Natural killer cell (primary cell): ENCODE measurements at regions of chr2 and their contacts with region 1.

Region 1: GRCh38 chr2:190343500-190344275 is at the start of gene INPP1:
- DNase-seq: peak; percentile 47 to 56
- ATAC-seq: peak; percentile 64 to 83 (median 70)
- H3K4me3 ChIP-seq: peak within 1 kb of the TSS; percentile 56
- H3K4me3 Mint-ChIP-seq: peak within 1 kb of the TSS; percentile 92
- H3K27ac ChIP-seq: peak within 1 kb of the TSS; percentile 70
- H3K27ac Mint-ChIP-seq: peak within 1 kb of the TSS; percentile 71 to 84
- H3K4me1 ChIP-seq: peaks cover 12% of the 10 kb centered on the region
- H3K4me1 Mint-ChIP-seq: peaks cover 16 to 18% of the 10 kb centered on the region in 2 donors
- H3K27me3 ChIP-seq: no peaks in the 10 kb centered on the region
- H3K27me3 Mint-ChIP-seq: no peaks in the 10 kb centered on the region
- CTCF ChIP-seq: no peak
- total RNA-seq, gene INPP1: 9.5 to 16.7 (median 9.6) TPM

Region 2: GRCh38 chr2:190360561-190360960 is 16.9 kb after region 1 on chr2:
- intact Hi-C with region 1: loop called (anchors 2 kb)
- DNase-seq: no peak
- ATAC-seq: no peak
- H3K4me3 ChIP-seq: peak overlapping the region; percentile 42
- H3K4me3 Mint-ChIP-seq: peak overlapping the region; percentile 98
- H3K27ac ChIP-seq: peak overlapping the region; percentile 65
- H3K27ac Mint-ChIP-seq: peak overlapping the region; percentile 95 to 99
- H3K4me1 ChIP-seq: peaks cover 6% of the 10 kb centered on the region
- H3K4me1 Mint-ChIP-seq: peaks cover 24 to 28% of the 10 kb centered on the region in 2 donors
- H3K27me3 ChIP-seq: no peaks in the 10 kb centered on the region
- H3K27me3 Mint-ChIP-seq: no peaks in the 10 kb centered on the region
- CTCF ChIP-seq: no peak

Region 3: DNA sequence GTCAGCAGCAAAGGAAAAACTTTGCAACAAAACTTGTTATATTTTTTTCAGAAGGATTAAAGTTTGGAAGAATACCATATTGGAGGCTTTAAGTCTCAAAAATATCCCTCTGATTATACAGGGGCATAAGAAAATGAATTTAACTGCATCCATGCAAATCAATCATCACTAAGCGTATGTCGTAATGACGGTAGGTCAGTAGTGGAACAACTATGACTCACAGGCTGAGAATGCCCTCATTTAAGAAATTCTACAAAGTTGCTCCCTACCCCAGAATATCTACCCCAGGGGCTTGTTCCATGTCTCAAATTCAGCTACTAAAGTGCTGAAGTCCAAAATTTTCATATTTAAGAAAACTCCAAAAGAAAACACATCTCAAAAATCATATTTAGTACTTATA is 292.7 kb after region 1 on chr2:
- intact Hi-C with region 1: no loop called
- DNase-seq: no peak
- ATAC-seq: no peak
- H3K4me3 ChIP-seq: no peak overlapping the region
- H3K4me3 Mint-ChIP-seq: no peak overlapping the region
- H3K27ac ChIP-seq: no peak overlapping the region
- H3K27ac Mint-ChIP-seq: no peak overlapping the region
- H3K4me1 ChIP-seq: no peaks in the 10 kb centered on the region
- H3K4me1 Mint-ChIP-seq: no peaks in the 10 kb centered on the region
- H3K27me3 ChIP-seq: no peaks in the 10 kb centered on the region
- H3K27me3 Mint-ChIP-seq: no peaks in the 10 kb centered on the region
- CTCF ChIP-seq: no peak